CD8-positive, alpha-beta T cell (primary cell): ENCODE measurements at regions of chr12 and their contacts with region 1.

Region 1: GRCh38 chr12:59650402-59651228 is 54.8 kb downstream of the SLC16A7 start:
- DNase-seq: no peak
- ATAC-seq: no peak
- H3K4me3 ChIP-seq: no peak overlapping the region
- H3K4me3 Mint-ChIP-seq: no peak overlapping the region
- H3K27ac ChIP-seq: no peak overlapping the region
- H3K27ac Mint-ChIP-seq: no peak overlapping the region
- H3K4me1 ChIP-seq: peaks cover 16% of the 10 kb centered on the region
- H3K4me1 Mint-ChIP-seq: peaks cover 45% of the 10 kb centered on the region
- H3K27me3 ChIP-seq: no peaks in the 10 kb centered on the region
- H3K27me3 Mint-ChIP-seq: no peaks in the 10 kb centered on the region
- CTCF ChIP-seq: no peak

Region 2: GRCh38 chr12:59633986-59634653 is 16.5 kb before region 1 on chr12:
- CTCF ChIA-PET with region 1: interaction called, 3 read pairs
- POLR2A ChIA-PET with region 1: no interaction called
- intact Hi-C with region 1: loop called in 1 of 2 experiments (anchors 2 kb)
- DNase-seq: no peak
- ATAC-seq: no peak
- H3K4me3 ChIP-seq: no peak overlapping the region
- H3K4me3 Mint-ChIP-seq: no peak overlapping the region
- H3K27ac ChIP-seq: no peak overlapping the region
- H3K27ac Mint-ChIP-seq: peak overlapping the region; percentile 30
- H3K4me1 ChIP-seq: peaks cover 15% of the 10 kb centered on the region
- H3K4me1 Mint-ChIP-seq: peaks cover 70% of the 10 kb centered on the region
- H3K27me3 ChIP-seq: no peaks in the 10 kb centered on the region
- H3K27me3 Mint-ChIP-seq: no peaks in the 10 kb centered on the region
- CTCF ChIP-seq: no peak

Region 3: DNA sequence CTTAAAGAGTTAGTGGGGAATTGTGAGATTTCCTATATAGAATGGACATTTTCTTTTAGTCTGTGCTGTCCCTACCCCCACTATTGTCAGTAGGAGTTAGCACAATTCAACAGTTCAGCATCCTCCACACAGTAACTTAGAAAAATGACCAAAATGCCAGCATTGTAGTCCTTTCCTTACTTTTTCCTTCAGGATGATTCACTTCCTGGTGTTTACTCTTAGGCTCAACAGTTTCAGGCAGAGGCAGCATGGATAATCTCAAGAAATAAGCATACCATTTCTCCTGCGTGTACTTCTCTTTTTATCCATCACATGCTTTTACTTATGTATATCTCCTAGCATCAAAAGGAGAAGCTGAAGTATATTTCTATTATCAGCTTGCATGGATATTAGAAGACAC is 628.6 kb after region 1 on chr12:
- CTCF ChIA-PET with region 1: no interaction called
- POLR2A ChIA-PET with region 1: no interaction called
- intact Hi-C with region 1: no loop called
- DNase-seq: no peak
- ATAC-seq: no peak
- H3K4me3 ChIP-seq: no peak overlapping the region
- H3K4me3 Mint-ChIP-seq: no peak overlapping the region
- H3K27ac ChIP-seq: no peak overlapping the region
- H3K27ac Mint-ChIP-seq: no peak overlapping the region
- H3K4me1 ChIP-seq: no peaks in the 10 kb centered on the region
- H3K4me1 Mint-ChIP-seq: no peaks in the 10 kb centered on the region
- H3K27me3 ChIP-seq: no peaks in the 10 kb centered on the region
- H3K27me3 Mint-ChIP-seq: no peaks in the 10 kb centered on the region
- CTCF ChIP-seq: no peak